Activated T-helper 1 cell treated with anti-CD3 and anti-CD28 coated beads, Interleukin-12 subunit alpha, Interleukin-12 subunit beta, Interleukin-2, Interleukin-4 antibody, amounts not matched to agents 30 ng/mL and 10 ng/mL and 1 ng/mL, durations not matched to agents 14 hours and 24 hours and 36 hours (primary cell): ENCODE measurements at regions of chr6 and their contacts with region 1.

Region 1: GRCh38 chr6:149211046-149211571 is 106.4 kb upstream of the TAB2 start:
- DNase-seq: no peak
- H3K4me3 Mint-ChIP-seq: no peak overlapping the region
- H3K27ac Mint-ChIP-seq: no peak overlapping the region
- H3K4me1 Mint-ChIP-seq: peaks cover 4% of the 10 kb centered on the region
- H3K27me3 Mint-ChIP-seq: no peaks in the 10 kb centered on the region

Region 2: DNA sequence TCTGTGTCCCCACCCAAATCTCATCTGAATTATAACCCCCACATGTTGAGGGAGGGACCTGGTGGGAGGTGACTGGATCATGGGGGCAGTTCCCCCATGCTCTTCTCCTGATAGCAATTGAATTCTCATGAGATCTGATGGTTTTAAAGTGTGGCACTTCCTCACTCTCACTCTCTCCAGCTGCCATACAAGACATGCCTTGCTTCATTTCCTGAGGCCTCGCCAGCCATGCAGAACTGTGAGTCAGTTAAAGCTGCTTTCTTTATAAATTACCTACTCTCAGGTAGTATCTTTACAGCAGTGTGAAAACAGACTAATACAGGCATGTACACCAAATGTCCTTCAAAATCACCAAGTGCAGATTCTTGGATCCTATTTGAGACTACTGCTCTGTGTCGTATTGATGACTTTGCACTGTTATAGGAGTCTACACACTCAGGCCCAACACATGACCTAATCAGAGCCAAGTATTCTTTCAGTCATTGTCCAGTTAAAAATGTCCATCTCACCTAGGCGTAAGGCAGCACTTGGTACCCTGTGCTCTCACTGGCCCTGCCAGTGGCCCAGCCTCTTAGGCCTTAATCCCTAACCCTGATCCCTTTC is 517.1 kb before region 1 on chr6:
- intact Hi-C with region 1: no loop called
- DNase-seq: no peak
- H3K4me3 Mint-ChIP-seq: no peak overlapping the region
- H3K27ac Mint-ChIP-seq: no peak overlapping the region
- H3K4me1 Mint-ChIP-seq: no peaks in the 10 kb centered on the region
- H3K27me3 Mint-ChIP-seq: peaks cover 5% of the 10 kb centered on the region

Region 3: GRCh38 chr6:149075616-149076364 is 135.3 kb before region 1 on chr6:
- intact Hi-C with region 1: loop called (anchors 1 kb)
- DNase-seq: no peak
- H3K4me3 Mint-ChIP-seq: no peak overlapping the region
- H3K27ac Mint-ChIP-seq: peak overlapping the region; percentile 62
- H3K4me1 Mint-ChIP-seq: peaks cover 61% of the 10 kb centered on the region
- H3K27me3 Mint-ChIP-seq: no peaks in the 10 kb centered on the region

Region 4: GRCh38 chr6:149140137-149140909 is 70.8 kb before region 1 on chr6:
- intact Hi-C with region 1: loop called (anchors 1 kb)
- DNase-seq: peak; percentile 62
- H3K4me3 Mint-ChIP-seq: peak overlapping the region; percentile 84
- H3K27ac Mint-ChIP-seq: peak overlapping the region; percentile 100
- H3K4me1 Mint-ChIP-seq: peaks cover 64% of the 10 kb centered on the region
- H3K27me3 Mint-ChIP-seq: no peaks in the 10 kb centered on the region

Region 5: GRCh38 chr6:149190224-149190831 is 20.8 kb before region 1 on chr6:
- intact Hi-C with region 1: loop called (anchors 2 kb)
- DNase-seq: no peak
- H3K4me3 Mint-ChIP-seq: no peak overlapping the region
- H3K27ac Mint-ChIP-seq: no peak overlapping the region
- H3K4me1 Mint-ChIP-seq: peaks cover 30% of the 10 kb centered on the region
- H3K27me3 Mint-ChIP-seq: no peaks in the 10 kb centered on the region

Region 6: GRCh38 chr6:149284904-149285303 is 73.8 kb after region 1 on chr6:
- intact Hi-C with region 1: no loop called
- DNase-seq: no peak
- H3K4me3 Mint-ChIP-seq: peak overlapping the region; percentile 20
- H3K27ac Mint-ChIP-seq: peak overlapping the region; percentile 75
- H3K4me1 Mint-ChIP-seq: peaks cover 47% of the 10 kb centered on the region
- H3K27me3 Mint-ChIP-seq: no peaks in the 10 kb centered on the region

Region 7: GRCh38 chr6:149335924-149336608 is 125.0 kb after region 1 on chr6:
- intact Hi-C with region 1: loop called (anchors 1 kb)
- DNase-seq: peak; percentile 22
- H3K4me3 Mint-ChIP-seq: peak overlapping the region; percentile 76
- H3K27ac Mint-ChIP-seq: peak overlapping the region; percentile 93
- H3K4me1 Mint-ChIP-seq: peaks cover 94% of the 10 kb centered on the region
- H3K27me3 Mint-ChIP-seq: no peaks in the 10 kb centered on the region

Region 8: GRCh38 chr6:149499066-149499465 is 288.0 kb after region 1 on chr6:
- intact Hi-C with region 1: loop called (anchors 5 kb)
- DNase-seq: no peak
- H3K4me3 Mint-ChIP-seq: no peak overlapping the region
- H3K27ac Mint-ChIP-seq: peak overlapping the region; percentile 83
- H3K4me1 Mint-ChIP-seq: peaks cover 78% of the 10 kb centered on the region
- H3K27me3 Mint-ChIP-seq: no peaks in the 10 kb centered on the region